ENCODE measurements at regions of chr12 and their contacts with region 1.

Region 1: DNA sequence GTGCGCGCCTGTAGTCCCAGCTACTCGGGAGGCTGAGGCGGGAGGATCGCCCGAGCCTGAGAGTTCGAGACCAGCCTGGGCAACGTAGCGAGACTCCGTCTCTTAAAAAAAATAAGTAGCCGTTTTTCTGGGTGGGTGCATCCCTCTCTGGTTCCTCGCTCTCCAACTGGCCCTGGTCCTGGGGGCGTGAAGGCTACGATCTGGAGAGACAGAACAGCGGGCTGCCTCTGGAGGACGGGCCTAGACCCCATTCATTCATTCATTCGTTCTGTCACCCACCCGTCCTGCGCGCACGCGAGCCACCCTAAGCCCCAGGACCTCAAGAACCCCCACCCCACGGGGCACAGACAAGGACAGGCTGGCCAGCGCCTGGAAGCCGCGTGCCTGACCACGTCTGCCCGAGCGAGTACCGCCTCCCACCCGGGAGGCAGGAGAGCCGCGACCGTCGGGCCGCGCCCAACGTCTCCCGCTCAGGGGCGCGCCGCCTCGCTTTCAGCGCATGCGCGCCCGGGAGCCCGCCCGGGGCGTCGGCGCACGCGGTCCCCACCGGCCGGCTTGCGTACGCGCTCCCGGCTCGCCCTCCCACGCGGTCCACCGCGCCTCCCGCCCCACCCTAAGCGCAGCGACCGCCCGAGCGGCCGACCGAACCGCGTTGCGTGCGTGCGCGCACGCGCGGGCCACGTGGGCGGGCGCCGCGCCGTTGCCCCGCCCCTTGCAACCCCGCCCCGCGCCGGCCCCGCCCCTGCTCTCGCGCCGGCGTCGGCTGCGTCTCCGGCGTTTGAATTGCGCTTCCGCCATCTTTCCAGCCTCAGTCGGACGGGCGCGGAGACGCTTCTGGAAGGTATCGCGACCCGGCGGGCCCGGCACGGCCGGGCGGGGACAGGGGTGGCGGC is at the start of gene RAN:
- DNase-seq: peak; percentile 97
- ATAC-seq: peak; percentile 77
- H3K4me3 ChIP-seq: peak within 1 kb of the TSS; percentile 70 to 81 (median 73)
- H3K4me3 Mint-ChIP-seq: peak within 1 kb of the TSS; percentile 96
- H3K27ac ChIP-seq: peak within 1 kb of the TSS; percentile 78 to 84
- H3K27ac Mint-ChIP-seq: peak within 1 kb of the TSS; percentile 92
- H3K4me1 ChIP-seq: peaks cover 23 to 26% of the 10 kb centered on the region in 2 donors
- H3K4me1 Mint-ChIP-seq: peaks cover 35% of the 10 kb centered on the region
- H3K27me3 ChIP-seq: no peaks in the 10 kb centered on the region
- H3K27me3 Mint-ChIP-seq: no peaks in the 10 kb centered on the region
- CTCF ChIP-seq: no peak
- total RNA-seq, gene RAN: 289 and 298 TPM in 2 replicates

Region 2: GRCh38 chr12:130728158-130729058 is 143.1 kb before region 1 on chr12:
- CTCF ChIA-PET with region 1: no interaction called
- POLR2A ChIA-PET with region 1: no interaction called
- intact Hi-C with region 1: no loop called
- DNase-seq: no peak
- ATAC-seq: no peak
- H3K4me3 ChIP-seq: no peak overlapping the region
- H3K4me3 Mint-ChIP-seq: no peak overlapping the region
- H3K27ac ChIP-seq: no peak overlapping the region
- H3K27ac Mint-ChIP-seq: no peak overlapping the region
- H3K4me1 ChIP-seq: no peaks in the 10 kb centered on the region
- H3K4me1 Mint-ChIP-seq: no peaks in the 10 kb centered on the region
- H3K27me3 ChIP-seq: no peaks in the 10 kb centered on the region
- H3K27me3 Mint-ChIP-seq: no peaks in the 10 kb centered on the region
- CTCF ChIP-seq: no peak

Region 3: GRCh38 chr12:130838951-130839769 is 32.4 kb before region 1 on chr12 and contains the start of gene STX2:
- CTCF ChIA-PET with region 1: interaction called, 3 read pairs
- POLR2A ChIA-PET with region 1: no interaction called
- intact Hi-C with region 1: loop called (anchors 1 kb)
- DNase-seq: peak; percentile 91
- ATAC-seq: peak; percentile 95
- H3K4me3 ChIP-seq: peak within 1 kb of the TSS; percentile 42 to 81 (median 56)
- H3K4me3 Mint-ChIP-seq: peak within 1 kb of the TSS; percentile 86
- H3K27ac ChIP-seq: no peak within 1 kb of the TSS
- H3K27ac Mint-ChIP-seq: peak within 1 kb of the TSS; percentile 64
- H3K4me1 ChIP-seq: peaks cover 10 to 17% of the 10 kb centered on the region in 2 donors
- H3K4me1 Mint-ChIP-seq: peaks cover 23% of the 10 kb centered on the region
- H3K27me3 ChIP-seq: no peaks in the 10 kb centered on the region
- H3K27me3 Mint-ChIP-seq: no peaks in the 10 kb centered on the region
- CTCF ChIP-seq: no peak
- total RNA-seq, gene STX2: 18.2 and 19.8 TPM in 2 replicates

Region 4: GRCh38 chr12:130980939-130981742 is 109.6 kb after region 1 on chr12:
- CTCF ChIA-PET with region 1: no interaction called
- POLR2A ChIA-PET with region 1: no interaction called
- intact Hi-C with region 1: loop called (anchors 5 kb)
- DNase-seq: peak; percentile 51
- ATAC-seq: no peak
- H3K4me3 ChIP-seq: peak overlapping the region in 3 of 5 experiments; percentile 3 to 34 (median 22)
- H3K4me3 Mint-ChIP-seq: peak overlapping the region; percentile 64
- H3K27ac ChIP-seq: peak overlapping the region; percentile 32 to 80
- H3K27ac Mint-ChIP-seq: peak overlapping the region; percentile 90
- H3K4me1 ChIP-seq: peaks cover 37 to 40% of the 10 kb centered on the region in 2 donors
- H3K4me1 Mint-ChIP-seq: peaks cover 40% of the 10 kb centered on the region
- H3K27me3 ChIP-seq: no peaks in the 10 kb centered on the region
- H3K27me3 Mint-ChIP-seq: no peaks in the 10 kb centered on the region
- CTCF ChIP-seq: no peak

Measured in B cell (primary cell).